ENCODE measurements at regions of chr5 and their contacts with region 1.

Region 1: GRCh38 chr5:176653401-176654385 is 6.4 kb downstream of the TSPAN17 start:
- DNase-seq: peak; percentile 44
- H3K4me3 Mint-ChIP-seq: peak overlapping the region; percentile 50
- H3K27ac Mint-ChIP-seq: peak overlapping the region; percentile 90
- H3K4me1 Mint-ChIP-seq: peaks cover 58% of the 10 kb centered on the region
- H3K27me3 Mint-ChIP-seq: peaks cover 2% of the 10 kb centered on the region

Region 2: DNA sequence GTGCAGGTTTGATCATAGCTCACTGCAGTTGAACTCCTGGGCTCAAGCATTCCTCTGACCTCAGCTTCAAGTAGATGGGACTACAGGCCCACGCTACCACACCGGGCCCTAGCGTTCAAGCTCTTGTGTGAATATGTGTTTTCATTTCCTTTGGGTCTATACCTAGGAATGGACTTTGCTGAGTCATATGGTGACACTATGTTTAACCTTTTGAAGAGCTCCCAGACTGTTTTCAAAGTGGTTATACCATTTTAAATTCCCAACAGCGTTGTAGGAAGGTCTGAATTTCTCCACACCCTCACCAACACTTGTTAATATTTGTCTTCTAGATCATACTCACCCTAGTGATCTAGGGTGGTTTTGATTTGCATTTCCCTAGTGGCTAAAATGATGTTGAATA is 172.0 kb before region 1 on chr5:
- intact Hi-C with region 1: no loop called
- DNase-seq: no peak
- H3K4me3 Mint-ChIP-seq: no peak overlapping the region
- H3K27ac Mint-ChIP-seq: no peak overlapping the region
- H3K4me1 Mint-ChIP-seq: peaks cover 20% of the 10 kb centered on the region
- H3K27me3 Mint-ChIP-seq: no peaks in the 10 kb centered on the region

Region 3: GRCh38 chr5:176700239-176700847 is 46.6 kb after region 1 on chr5:
- intact Hi-C with region 1: no loop called
- DNase-seq: no peak
- H3K4me3 Mint-ChIP-seq: no peak overlapping the region
- H3K27ac Mint-ChIP-seq: no peak overlapping the region
- H3K4me1 Mint-ChIP-seq: no peaks in the 10 kb centered on the region
- H3K27me3 Mint-ChIP-seq: peaks cover 30% of the 10 kb centered on the region

Region 4: DNA sequence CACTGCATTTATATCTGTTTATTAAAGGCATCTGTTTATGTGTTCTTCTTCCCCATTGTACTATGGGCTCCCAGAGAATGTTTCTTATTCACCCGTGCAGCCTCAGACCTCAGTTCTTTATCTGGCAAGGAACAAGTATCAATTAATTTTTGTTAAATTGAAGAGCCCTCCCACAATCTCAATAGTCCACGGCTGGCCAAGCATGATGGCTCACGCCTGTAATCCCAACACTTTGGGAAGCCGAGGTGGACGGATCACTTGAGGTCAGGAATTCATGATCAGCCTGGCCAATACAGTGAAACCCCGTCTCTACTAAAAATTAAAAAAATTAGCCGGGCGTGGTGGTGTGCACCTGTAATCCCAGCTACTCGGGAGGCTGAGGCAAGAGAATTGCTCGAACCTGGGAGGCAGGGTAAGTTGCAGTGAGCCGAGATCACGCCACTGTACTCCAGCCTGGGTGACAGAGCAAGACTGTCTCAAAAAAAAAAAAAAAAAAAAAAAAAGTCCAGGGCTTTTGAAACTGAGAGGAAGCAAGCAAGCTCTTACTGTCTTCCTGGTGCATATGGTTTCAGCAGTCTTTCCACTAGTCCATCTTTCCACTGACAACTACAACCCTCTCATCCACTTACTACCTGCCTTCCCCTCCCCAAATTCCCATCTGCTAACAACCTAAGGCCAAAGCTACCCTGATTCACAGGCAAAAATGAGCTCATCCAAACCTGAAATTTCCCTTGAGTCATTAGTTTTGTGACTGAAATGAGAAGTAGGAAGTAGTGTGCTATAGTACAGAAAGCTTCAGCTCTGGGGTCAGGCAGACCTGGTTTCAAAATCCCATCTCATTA is 247.8 kb after region 1 on chr5:
- intact Hi-C with region 1: loop called (anchors 1 kb)
- DNase-seq: no peak
- H3K4me3 Mint-ChIP-seq: peak overlapping the region; percentile 16
- H3K27ac Mint-ChIP-seq: peak overlapping the region; percentile 82
- H3K4me1 Mint-ChIP-seq: peaks cover 28% of the 10 kb centered on the region
- H3K27me3 Mint-ChIP-seq: no peaks in the 10 kb centered on the region

Measured in activated T-helper 1 cell treated with anti-CD3 and anti-CD28 coated beads, Interleukin-12 subunit alpha, Interleukin-12 subunit beta, Interleukin-2, Interleukin-4 antibody, amounts not matched to agents 30 ng/mL and 10 ng/mL and 1 ng/mL, durations not matched to agents 14 hours and 24 hours and 36 hours (primary cell).